PC-9 (cell line): ENCODE measurements at regions of chr2 and their contacts with region 1.

Region 1: DNA sequence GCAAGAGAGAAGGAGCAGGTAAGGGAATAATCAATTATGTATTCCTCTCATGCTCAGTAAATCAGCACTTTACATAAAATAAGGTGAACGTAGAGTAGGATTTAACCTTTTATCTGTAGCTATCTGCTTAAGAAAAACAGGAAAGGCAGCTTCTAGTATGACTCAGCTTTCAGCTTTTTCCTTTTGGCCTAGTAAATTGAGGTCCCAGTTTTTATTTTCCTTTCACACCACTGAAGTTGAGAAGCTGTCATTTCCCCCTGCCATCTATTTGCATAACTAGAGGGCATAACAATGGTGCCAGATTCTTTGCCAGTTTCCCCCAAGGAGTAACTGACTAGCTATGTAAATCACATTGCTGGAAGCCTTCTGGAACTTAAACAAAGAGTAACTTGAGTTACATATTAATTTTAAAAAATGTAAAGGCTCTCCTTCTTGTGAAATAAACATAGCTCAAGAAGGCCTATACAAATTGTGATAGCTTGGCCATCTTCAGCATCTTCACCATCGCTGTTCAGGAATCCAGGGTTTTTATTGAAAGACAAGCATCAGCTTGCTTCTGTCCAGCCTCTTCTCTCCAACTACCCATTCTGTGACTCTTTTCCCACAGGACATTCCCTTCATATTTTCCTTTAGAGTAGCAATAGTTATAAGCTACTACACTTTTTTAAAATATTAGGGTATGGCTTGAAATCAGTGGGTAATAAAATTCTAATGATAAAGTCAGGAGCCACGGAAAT is 97.0 kb downstream of the KYNU start:
- DNase-seq: peak; percentile 45 to 97
- H3K4me3 ChIP-seq: peak overlapping the region; percentile 46
- H3K27ac ChIP-seq: peak overlapping the region; percentile 99
- H3K4me1 ChIP-seq: peaks cover 52% of the 10 kb centered on the region
- H3K27me3 ChIP-seq: no peaks in the 10 kb centered on the region
- CTCF ChIP-seq: no peak

Region 2: DNA sequence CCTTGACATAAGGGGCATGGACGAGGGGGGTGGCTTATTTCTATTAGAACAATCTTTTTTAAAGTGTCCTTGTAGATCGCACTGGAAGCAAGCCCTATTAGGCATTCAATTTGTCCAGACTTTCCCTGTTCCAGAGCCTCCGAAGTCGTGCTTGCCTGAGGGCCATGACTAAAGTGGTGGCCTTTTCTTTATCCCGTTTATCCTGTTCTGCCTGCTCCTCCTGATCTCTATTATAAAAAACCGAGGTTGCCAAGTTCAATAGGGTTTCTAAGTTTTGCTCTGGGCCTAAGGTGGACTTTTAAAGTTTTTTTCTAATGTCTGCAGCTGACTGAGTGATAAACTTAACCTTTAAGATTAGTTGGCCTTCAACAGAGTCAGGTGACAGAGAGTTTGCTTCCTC is 70.7 kb before region 1 on chr2:
- CTCF ChIA-PET with region 1: no interaction called
- POLR2A ChIA-PET with region 1: interaction called, 5 read pairs
- intact Hi-C with region 1: loop called (anchors 1 kb)
- DNase-seq: peak; percentile 80 to 97
- H3K4me3 ChIP-seq: peak overlapping the region; percentile 2; the same call in 1 of the 2 replicates
- H3K27ac ChIP-seq: peak overlapping the region; percentile 94
- H3K4me1 ChIP-seq: peaks cover 53% of the 10 kb centered on the region
- H3K27me3 ChIP-seq: no peaks in the 10 kb centered on the region
- CTCF ChIP-seq: no peak